Activated CD4-positive, alpha-beta T cell treated with anti-CD3 and anti-CD28 coated beads for 36 hours (primary cell): ENCODE measurements at regions of chr5 and their contacts with region 1.

Region 1: GRCh38 chr5:126869005-126869451 is 92.1 kb downstream of the LMNB1 start:
- DNase-seq: peak; percentile 55
- ATAC-seq: peak; percentile 83
- H3K4me3 Mint-ChIP-seq: peak overlapping the region; percentile 57
- H3K27ac Mint-ChIP-seq: peak overlapping the region; percentile 32
- H3K4me1 Mint-ChIP-seq: peaks cover 10% of the 10 kb centered on the region
- H3K27me3 Mint-ChIP-seq: no peaks in the 10 kb centered on the region

Region 2: GRCh38 chr5:127072861-127073846 is 204.1 kb after region 1 on chr5 and contains the start of gene C5orf63:
- CTCF ChIA-PET with region 1: no interaction called
- POLR2A ChIA-PET with region 1: no interaction called
- intact Hi-C with region 1: loop called in 1 of 2 experiments (anchors 10 kb)
- DNase-seq: peak; percentile 87
- ATAC-seq: peak; percentile 98
- H3K4me3 Mint-ChIP-seq: peak within 1 kb of the TSS; percentile 86
- H3K27ac Mint-ChIP-seq: peak within 1 kb of the TSS; percentile 97
- H3K4me1 Mint-ChIP-seq: peaks cover 9% of the 10 kb centered on the region
- H3K27me3 Mint-ChIP-seq: no peaks in the 10 kb centered on the region
- total RNA-seq, gene C5orf63: 12.0 to 14.2 TPM

Region 3: DNA sequence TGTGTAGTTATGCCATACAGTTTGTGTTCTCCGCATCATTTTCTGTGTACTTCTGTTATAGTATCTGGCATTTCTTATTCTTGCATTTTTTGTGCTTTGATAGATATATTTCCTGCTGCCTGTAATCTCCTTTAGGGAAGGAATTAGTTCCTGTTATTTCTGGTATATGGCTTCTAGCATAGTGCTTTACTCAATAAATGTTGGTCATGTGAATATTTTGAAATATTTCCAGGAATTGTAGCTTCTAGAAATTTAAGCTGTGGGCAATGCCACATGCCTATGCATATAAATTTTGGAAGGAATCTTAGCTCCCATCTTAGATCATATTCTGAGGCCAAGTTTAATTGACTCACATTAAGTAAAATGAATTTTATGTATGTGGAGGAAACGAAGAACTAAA is 636.9 kb after region 1 on chr5:
- CTCF ChIA-PET with region 1: no interaction called
- POLR2A ChIA-PET with region 1: no interaction called
- intact Hi-C with region 1: loop called in 1 of 2 experiments (anchors 10 kb)
- DNase-seq: no peak
- ATAC-seq: no peak
- H3K4me3 Mint-ChIP-seq: no peak overlapping the region
- H3K27ac Mint-ChIP-seq: no peak overlapping the region
- H3K4me1 Mint-ChIP-seq: no peaks in the 10 kb centered on the region
- H3K27me3 Mint-ChIP-seq: peaks cover 14% of the 10 kb centered on the region